Activated T-helper 2 cell treated with anti-CD3 and anti-CD28 coated beads, Interferon-gamma antibody, Interleukin-2, Interleukin-4, amounts not matched to agents 10 μg/mL and 5 μg/mL and 100 μg/mL, durations not matched to agents 14 hours and 24 hours and 36 hours (primary cell): ENCODE measurements at regions of chr18 and their contacts with region 1.

Region 1: DNA sequence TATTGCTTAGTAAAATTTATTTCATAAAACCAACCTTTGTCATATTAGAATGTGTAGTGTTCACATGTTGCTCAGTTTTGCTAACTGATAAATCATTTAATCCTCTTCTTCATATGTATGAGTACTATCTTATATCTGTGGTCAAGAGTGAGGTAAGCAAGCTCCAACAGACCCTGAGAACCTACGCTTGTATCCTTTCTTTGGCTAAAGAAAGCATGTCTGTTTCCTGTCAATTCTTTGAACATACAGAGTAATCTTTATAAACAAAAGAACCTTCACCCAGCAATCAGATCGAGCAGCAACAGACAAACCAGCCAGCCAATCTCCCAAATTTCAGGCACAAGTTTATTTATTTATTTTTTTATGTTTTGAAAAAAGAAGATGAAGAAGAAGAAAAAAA is 6.4 kb downstream of the ADCYAP1 start:
- DNase-seq: no peak
- H3K4me3 Mint-ChIP-seq: no peak overlapping the region
- H3K27ac Mint-ChIP-seq: no peak overlapping the region
- H3K4me1 Mint-ChIP-seq: peaks cover 7% of the 10 kb centered on the region
- H3K27me3 Mint-ChIP-seq: peaks cover 66% of the 10 kb centered on the region

Region 2: GRCh38 chr18:499551-500408 is 411.2 kb before region 1 on chr18:
- intact Hi-C with region 1: loop called (anchors 10 kb)
- DNase-seq: no peak
- H3K4me3 Mint-ChIP-seq: no peak overlapping the region
- H3K27ac Mint-ChIP-seq: no peak overlapping the region
- H3K4me1 Mint-ChIP-seq: peaks cover 1% of the 10 kb centered on the region
- H3K27me3 Mint-ChIP-seq: peaks cover 48% of the 10 kb centered on the region

Region 3: GRCh38 chr18:980586-980985 is 69.6 kb after region 1 on chr18:
- intact Hi-C with region 1: no loop called
- DNase-seq: no peak
- H3K4me3 Mint-ChIP-seq: no peak overlapping the region
- H3K27ac Mint-ChIP-seq: no peak overlapping the region
- H3K4me1 Mint-ChIP-seq: no peaks in the 10 kb centered on the region
- H3K27me3 Mint-ChIP-seq: no peaks in the 10 kb centered on the region

Region 4: GRCh38 chr18:995629-996028 is 84.6 kb after region 1 on chr18:
- intact Hi-C with region 1: no loop called
- DNase-seq: no peak
- H3K4me3 Mint-ChIP-seq: no peak overlapping the region
- H3K27ac Mint-ChIP-seq: no peak overlapping the region
- H3K4me1 Mint-ChIP-seq: no peaks in the 10 kb centered on the region
- H3K27me3 Mint-ChIP-seq: no peaks in the 10 kb centered on the region